Activated T-helper 2 cell treated with anti-CD3 and anti-CD28 coated beads, Interferon-gamma antibody, Interleukin-2, Interleukin-4, amounts not matched to agents 10 μg/mL and 5 μg/mL and 100 μg/mL, durations not matched to agents 14 hours and 24 hours and 36 hours (primary cell): ENCODE measurements at regions of chr11 and their contacts with region 1.

Region 1: DNA sequence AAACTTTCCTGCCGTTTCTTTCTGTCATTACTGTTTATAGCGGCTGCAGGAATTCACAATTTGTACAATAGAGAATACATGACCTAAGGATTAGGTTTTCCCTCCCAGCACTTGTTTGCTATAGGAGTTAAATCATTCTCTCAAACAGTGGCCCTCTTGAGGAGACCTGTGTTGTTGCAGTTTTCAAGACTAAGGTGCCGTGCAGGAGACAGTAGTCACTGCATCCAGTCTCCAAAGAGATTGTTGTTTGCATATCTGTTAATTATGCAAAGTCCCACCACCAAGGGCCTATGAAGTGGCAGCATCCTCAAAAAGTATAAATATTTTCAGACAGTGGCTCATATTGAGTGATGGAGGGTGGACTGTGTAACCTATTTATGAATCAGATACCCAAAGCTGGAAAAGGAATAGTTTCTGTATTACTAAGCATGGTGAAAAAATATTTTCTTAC is 2.3 kb downstream of the PRSS23 start:
- DNase-seq: no peak
- H3K4me3 Mint-ChIP-seq: no peak overlapping the region
- H3K27ac Mint-ChIP-seq: no peak overlapping the region
- H3K4me1 Mint-ChIP-seq: peaks cover 59% of the 10 kb centered on the region
- H3K27me3 Mint-ChIP-seq: peaks cover 50% of the 10 kb centered on the region

Region 2: GRCh38 chr11:85752890-85753581 is 1049.6 kb before region 1 on chr11:
- intact Hi-C with region 1: loop called (anchors 5 kb)
- DNase-seq: peak; percentile 91
- H3K4me3 Mint-ChIP-seq: peak overlapping the region; percentile 57
- H3K27ac Mint-ChIP-seq: peak overlapping the region; percentile 95
- H3K4me1 Mint-ChIP-seq: peaks cover 89% of the 10 kb centered on the region
- H3K27me3 Mint-ChIP-seq: no peaks in the 10 kb centered on the region

Region 3: GRCh38 chr11:86068951-86069407 is 733.6 kb before region 1 on chr11 and contains the start of gene PICALM:
- intact Hi-C with region 1: loop called (anchors 10 kb)
- DNase-seq: peak; percentile 97
- H3K4me3 Mint-ChIP-seq: peak within 1 kb of the TSS; percentile 95
- H3K27ac Mint-ChIP-seq: peak within 1 kb of the TSS; percentile 88
- H3K4me1 Mint-ChIP-seq: peaks cover 30% of the 10 kb centered on the region
- H3K27me3 Mint-ChIP-seq: peaks cover 2% of the 10 kb centered on the region
- total RNA-seq, gene PICALM: 193 and 213 TPM in 2 replicates

Region 4: DNA sequence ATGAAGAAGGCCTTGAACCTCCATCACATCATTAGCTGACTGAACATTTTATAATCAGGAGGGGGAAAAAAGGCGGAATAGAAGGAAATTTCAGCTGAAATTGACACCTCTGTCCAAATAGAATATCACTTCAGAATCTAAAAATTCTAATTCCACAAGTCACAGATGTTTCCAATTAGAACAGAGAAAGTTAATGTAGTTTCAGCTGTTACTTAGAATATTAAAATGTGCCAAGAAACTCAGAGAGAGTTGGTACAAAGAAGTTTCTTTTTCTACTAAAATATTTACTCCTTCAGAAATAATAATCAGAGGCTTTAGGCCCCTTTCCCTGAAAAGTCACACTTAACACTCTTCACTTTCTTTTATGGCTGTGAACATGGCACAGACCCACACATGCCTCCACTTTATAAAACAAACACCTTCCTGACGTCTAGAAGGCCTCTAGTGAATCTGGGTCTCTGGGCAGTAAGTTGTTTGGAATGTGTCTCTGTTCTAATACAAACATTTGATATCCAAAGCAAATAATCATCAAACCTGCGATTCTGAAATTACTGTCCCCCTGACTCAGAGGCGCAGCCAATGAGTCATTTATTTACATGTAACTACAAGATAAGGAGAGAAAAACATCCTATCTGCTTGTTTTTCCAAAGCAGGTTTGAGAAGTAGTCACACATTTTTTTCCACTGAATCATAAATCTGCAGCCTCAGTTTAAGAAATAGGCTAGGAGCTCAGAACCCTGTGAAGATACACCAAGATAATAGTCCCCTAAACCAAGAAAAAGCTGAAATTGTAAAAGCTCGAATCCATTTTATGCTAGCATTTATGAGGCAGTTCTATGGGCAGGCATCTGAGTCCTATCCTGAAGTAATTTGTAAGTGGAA is 278.6 kb before region 1 on chr11:
- intact Hi-C with region 1: loop called (anchors 5 kb)
- DNase-seq: no peak
- H3K4me3 Mint-ChIP-seq: no peak overlapping the region
- H3K27ac Mint-ChIP-seq: peak overlapping the region; percentile 62
- H3K4me1 Mint-ChIP-seq: peaks cover 26% of the 10 kb centered on the region
- H3K27me3 Mint-ChIP-seq: peaks cover 3% of the 10 kb centered on the region

Region 5: GRCh38 chr11:86688398-86689179 is 114.0 kb before region 1 on chr11:
- intact Hi-C with region 1: loop called (anchors 1 kb)
- DNase-seq: no peak
- H3K4me3 Mint-ChIP-seq: peak overlapping the region; percentile 61
- H3K27ac Mint-ChIP-seq: peak overlapping the region; percentile 92
- H3K4me1 Mint-ChIP-seq: peaks cover 24% of the 10 kb centered on the region
- H3K27me3 Mint-ChIP-seq: peaks cover 6% of the 10 kb centered on the region

Region 6: DNA sequence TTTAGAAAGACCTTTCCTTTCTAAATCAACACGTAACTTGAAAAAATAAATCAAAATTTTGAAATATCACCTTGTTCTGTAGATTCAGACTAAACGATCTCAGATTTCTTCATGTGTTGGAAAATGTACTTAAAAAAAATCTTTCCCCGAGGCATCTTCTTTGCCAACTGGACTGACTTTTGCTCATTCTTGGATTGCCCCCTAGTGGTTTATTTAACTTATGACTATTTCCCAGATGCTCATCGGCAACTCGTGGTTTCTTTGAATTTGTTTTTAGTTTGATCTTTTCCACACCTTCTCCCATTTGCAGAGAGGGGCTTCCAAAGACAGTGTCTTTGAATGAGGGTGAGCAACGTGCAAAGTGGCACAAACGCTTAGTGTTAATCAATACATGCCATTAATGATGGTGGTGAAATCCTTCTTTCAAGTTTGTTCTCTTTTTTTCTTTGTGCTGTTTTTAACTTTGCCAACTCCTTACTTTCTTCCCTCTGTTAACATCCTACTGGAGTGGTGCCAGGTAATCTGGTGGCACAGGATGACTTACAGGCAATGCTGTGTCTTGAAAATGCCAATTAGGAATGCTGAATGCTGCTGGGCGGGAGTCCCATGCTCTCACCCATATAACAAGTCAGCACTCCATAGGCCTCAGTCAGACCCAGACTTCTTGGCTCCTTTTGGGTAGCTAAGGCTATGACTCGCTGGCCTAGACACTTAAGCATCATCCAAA is 16.0 kb after region 1 on chr11:
- intact Hi-C with region 1: no loop called
- DNase-seq: no peak
- H3K4me3 Mint-ChIP-seq: no peak overlapping the region
- H3K27ac Mint-ChIP-seq: no peak overlapping the region
- H3K4me1 Mint-ChIP-seq: no peaks in the 10 kb centered on the region
- H3K27me3 Mint-ChIP-seq: peaks cover 20% of the 10 kb centered on the region

Region 7: DNA sequence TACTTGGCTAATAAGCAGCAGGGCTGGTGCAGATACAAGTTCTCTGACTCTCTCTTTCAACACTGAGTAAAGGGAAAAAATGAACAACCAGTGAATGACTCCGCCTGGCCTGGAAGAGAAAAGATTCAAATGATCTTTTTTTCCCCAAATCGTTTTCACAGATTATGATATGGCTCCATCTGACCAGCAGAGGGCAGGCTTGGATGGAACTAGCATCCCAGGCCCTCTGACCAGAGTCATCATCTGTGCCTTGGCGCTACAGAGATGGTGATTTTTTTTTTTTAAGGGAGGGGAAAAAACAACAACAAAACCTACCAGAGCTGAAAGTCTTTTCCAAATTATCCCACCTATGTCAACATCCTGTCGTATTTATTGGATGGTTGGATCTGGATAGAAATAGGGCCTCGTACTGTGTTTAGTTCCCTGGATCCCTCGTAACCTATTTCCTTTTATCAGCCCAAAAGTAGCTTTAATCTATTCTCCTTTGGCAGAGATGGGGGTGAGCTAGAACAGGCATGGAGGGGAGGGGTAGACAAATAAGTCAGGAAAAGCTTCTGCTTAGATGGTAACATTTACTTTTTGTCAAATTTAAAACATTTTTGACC is 67.4 kb after region 1 on chr11:
- intact Hi-C with region 1: no loop called
- DNase-seq: peak; percentile 14
- H3K4me3 Mint-ChIP-seq: no peak overlapping the region
- H3K27ac Mint-ChIP-seq: no peak overlapping the region
- H3K4me1 Mint-ChIP-seq: no peaks in the 10 kb centered on the region
- H3K27me3 Mint-ChIP-seq: peaks cover 6% of the 10 kb centered on the region

Region 8: DNA sequence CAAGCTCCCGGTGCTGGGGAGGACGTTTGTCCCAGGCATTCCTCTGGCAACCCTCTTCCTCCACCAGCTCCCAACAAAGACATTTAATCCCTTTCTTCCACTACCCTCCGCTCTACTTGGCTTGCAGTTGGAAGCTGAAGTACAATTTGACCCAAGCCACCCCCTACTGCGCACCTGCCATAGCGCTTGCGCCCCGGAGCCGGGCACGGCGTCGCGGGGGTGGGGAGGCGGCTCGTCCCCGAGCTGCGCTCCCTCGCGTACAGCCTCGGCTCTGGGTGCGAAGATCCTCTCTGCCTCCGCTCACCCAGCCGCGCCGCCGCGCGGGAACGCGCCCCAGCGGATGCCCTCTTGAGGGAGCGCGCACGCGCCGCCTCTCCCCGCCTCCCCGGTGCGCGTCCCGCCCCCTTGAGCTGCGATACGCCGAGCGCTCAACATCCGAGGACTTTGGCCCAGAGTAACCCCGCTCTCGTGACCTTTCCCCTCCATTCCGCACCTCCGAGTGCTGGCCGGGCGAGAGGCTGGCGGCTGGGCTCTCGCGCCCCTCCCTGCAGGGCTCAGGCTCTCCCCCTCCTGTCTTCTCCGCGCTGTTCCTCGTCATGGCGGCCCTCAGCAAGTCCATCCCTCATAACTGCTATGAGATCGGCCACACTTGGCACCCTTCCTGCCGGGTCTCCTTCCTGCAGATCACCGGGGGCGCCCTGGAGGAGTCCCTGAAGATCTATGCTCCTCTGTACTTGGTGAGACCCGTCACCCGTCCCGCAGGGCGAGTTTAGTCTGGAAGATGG is 235.0 kb after region 1 on chr11 and contains the start of gene TMEM135:
- intact Hi-C with region 1: loop called (anchors 10 kb)
- DNase-seq: peak; percentile 94
- H3K4me3 Mint-ChIP-seq: peak within 1 kb of the TSS; percentile 97
- H3K27ac Mint-ChIP-seq: peak within 1 kb of the TSS; percentile 90
- H3K4me1 Mint-ChIP-seq: peaks cover 40% of the 10 kb centered on the region
- H3K27me3 Mint-ChIP-seq: peaks cover 6% of the 10 kb centered on the region
- total RNA-seq, gene TMEM135: 39.7 and 40.2 TPM in 2 replicates